Activated naive CD4-positive, alpha-beta T cell treated with anti-CD3 and anti-CD28 coated beads for 36 hours (primary cell): ENCODE measurements at regions of chr20 and their contacts with region 1.

Region 1: GRCh38 chr20:50165684-50166554 is 12.4 kb upstream of the PEDS1 start:
- DNase-seq: peak; percentile 97
- H3K4me3 Mint-ChIP-seq: peak overlapping the region; percentile 65
- H3K27ac Mint-ChIP-seq: peak overlapping the region; percentile 63
- H3K4me1 Mint-ChIP-seq: peaks cover 11% of the 10 kb centered on the region
- H3K27me3 Mint-ChIP-seq: peaks cover 2% of the 10 kb centered on the region

Region 2: GRCh38 chr20:49936153-49937027 is 229.5 kb before region 1 on chr20 and contains the start of gene RNF114:
- CTCF ChIA-PET with region 1: no interaction called
- intact Hi-C with region 1: loop called (anchors 1 kb)
- DNase-seq: peak; percentile 93
- H3K4me3 Mint-ChIP-seq: peak within 1 kb of the TSS; percentile 96
- H3K27ac Mint-ChIP-seq: peak within 1 kb of the TSS; percentile 83
- H3K4me1 Mint-ChIP-seq: peaks cover 46% of the 10 kb centered on the region
- H3K27me3 Mint-ChIP-seq: no peaks in the 10 kb centered on the region
- total RNA-seq, gene RNF114: 72.3 to 76.5 TPM

Region 3: DNA sequence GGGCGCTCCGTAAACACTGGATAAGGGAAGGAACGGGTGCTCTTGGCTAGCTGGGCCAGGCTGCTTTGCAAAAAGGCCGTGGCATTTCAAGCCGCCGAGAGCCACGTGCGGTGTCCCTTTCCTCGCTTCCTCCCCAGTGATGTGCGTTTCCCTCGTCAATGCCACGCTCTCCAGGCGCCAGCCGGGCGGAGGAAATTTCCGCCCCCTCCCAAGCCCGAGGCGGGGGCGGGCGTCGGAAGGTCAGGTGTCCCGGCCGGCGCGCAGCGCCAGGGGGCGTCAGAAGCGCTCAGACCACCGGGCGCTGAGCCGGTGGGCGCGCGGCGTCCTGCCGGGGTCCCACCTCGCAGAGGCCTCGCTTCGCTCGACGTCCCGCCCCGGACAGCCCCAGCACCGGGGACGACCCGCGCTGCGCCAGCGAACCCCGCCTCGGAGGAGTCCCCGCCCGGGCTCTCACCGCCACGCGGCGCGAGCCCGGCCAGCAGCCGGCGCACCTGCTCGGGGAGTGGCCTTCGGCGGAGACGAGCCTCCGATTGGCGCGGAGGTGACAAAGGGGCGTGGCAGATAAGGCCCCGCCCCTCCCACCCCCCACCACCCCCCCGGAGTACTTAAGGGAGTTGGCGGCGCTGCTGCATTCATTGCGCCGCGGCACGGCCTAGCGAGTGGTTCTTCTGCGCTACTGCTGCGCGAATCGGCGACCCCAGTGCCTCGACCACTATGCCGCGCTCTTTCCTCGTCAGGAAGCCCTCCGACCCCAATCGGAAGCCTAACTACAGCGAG is 183.4 kb before region 1 on chr20 and contains the start of gene SNAI1:
- CTCF ChIA-PET with region 1: interaction called, 19 read pairs
- intact Hi-C with region 1: loop called (anchors 1 kb)
- DNase-seq: peak; percentile 75
- H3K4me3 Mint-ChIP-seq: peak within 1 kb of the TSS; percentile 48
- H3K27ac Mint-ChIP-seq: no peak within 1 kb of the TSS
- H3K4me1 Mint-ChIP-seq: peaks cover 20% of the 10 kb centered on the region
- H3K27me3 Mint-ChIP-seq: peaks cover 3% of the 10 kb centered on the region
- total RNA-seq, gene SNAI1: 0.31 TPM in 1 of 2 experiments, not detected in the other

Region 4: DNA sequence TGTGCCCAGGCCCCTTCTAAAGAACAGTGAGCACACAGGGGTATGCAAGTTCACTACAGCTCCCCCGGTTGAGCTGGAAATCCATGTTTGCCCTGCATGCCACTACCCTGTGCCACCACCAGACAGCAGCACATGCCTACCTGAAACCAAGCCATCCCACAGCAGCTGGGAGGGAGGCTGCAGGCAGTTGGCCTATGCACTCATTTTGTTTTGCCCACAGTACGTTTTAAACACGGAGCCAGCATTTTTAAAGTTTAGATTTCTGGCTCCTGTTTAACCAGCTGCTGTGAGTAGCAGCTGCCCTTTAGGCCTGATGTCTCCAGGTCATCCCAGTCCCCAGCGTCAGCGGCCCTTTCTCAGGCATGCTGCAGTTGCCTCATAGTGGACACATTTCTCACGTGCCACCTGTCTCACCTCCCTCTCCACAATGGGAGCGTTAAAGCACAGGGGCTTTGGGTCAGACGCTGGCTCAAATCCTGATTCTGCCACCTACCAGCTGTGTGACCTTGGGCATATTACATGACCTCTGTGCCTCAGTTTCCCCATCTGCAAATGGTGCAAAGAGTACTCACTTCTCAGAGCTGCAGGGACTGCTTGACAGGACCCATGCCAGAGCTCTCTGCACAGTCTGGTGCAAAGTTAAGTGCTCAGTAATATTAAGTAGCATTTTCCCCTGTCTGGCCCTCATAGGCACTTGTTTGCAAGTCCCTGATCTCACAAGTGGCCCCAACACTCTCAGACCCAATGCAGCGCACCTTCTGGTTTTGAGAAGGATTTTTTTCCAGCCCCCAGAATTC is 44.8 kb before region 1 on chr20:
- CTCF ChIA-PET with region 1: interaction called, 164 read pairs
- intact Hi-C with region 1: loop called (anchors 1 kb)
- DNase-seq: peak; percentile 73
- H3K4me3 Mint-ChIP-seq: no peak overlapping the region
- H3K27ac Mint-ChIP-seq: no peak overlapping the region
- H3K4me1 Mint-ChIP-seq: peaks cover 8% of the 10 kb centered on the region
- H3K27me3 Mint-ChIP-seq: no peaks in the 10 kb centered on the region

Region 5: DNA sequence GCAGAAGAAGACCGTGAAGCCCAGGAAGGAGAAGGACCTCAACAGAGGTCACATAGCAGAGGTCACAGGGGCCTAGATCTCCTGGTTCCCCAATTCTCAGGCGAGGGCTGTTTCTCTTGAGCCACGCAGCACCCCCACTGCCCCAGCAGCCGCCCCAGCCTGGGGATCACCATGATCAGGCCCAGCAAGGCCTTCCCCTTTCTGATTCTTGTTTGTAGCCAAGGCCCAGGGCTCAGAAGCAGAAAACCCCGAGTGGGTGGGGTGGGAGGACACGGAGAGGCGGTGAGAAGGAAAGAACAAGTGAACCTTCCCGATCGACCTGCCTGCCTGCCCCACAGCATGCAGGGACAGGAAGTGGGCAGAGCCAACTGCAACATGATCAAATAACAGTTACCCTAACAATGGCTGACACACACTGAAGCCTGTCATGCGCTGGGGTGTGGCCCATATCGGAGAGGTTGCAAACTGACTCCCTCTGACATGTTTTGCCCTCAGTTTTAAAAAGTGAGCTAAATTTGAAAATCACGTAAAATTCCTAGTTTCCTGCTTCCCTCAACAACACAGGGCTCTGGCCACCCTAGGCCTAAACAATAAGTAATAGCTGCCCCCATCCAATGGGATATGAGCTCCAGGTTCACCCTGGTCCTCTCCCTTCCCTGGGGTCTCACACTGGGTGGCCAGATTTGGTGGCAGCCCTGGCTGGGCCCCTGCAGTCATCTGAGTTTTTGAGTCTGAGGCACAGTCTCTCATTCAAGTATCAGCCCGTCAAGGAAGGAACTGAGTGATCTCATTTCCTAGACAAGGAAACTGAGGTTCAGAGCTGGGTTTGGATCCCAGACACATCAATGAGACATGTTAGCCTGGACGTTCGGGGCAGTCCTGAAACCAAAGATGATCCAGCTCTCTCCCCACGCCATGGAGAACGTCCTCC is 18.9 kb before region 1 on chr20:
- CTCF ChIA-PET with region 1: interaction called, 14 read pairs
- intact Hi-C with region 1: loop called (anchors 1 kb)
- DNase-seq: peak; percentile 91
- H3K4me3 Mint-ChIP-seq: peak overlapping the region; percentile 74
- H3K27ac Mint-ChIP-seq: peak overlapping the region; percentile 98
- H3K4me1 Mint-ChIP-seq: peaks cover 61% of the 10 kb centered on the region
- H3K27me3 Mint-ChIP-seq: no peaks in the 10 kb centered on the region

Region 6: GRCh38 chr20:50153485-50154377 is 12.2 kb before region 1 on chr20 and contains the start of gene PEDS1:
- CTCF ChIA-PET with region 1: interaction called, 31 read pairs
- intact Hi-C with region 1: loop called (anchors 1 kb)
- DNase-seq: peak; percentile 87
- H3K4me3 Mint-ChIP-seq: peak within 1 kb of the TSS; percentile 75
- H3K27ac Mint-ChIP-seq: peak within 1 kb of the TSS; percentile 84
- H3K4me1 Mint-ChIP-seq: peaks cover 39% of the 10 kb centered on the region
- H3K27me3 Mint-ChIP-seq: no peaks in the 10 kb centered on the region
- total RNA-seq, gene PEDS1: 10.4 to 11.2 TPM

Region 7: GRCh38 chr20:50179507-50180016 is 13.6 kb after region 1 on chr20:
- CTCF ChIA-PET with region 1: interaction called, 13 read pairs
- intact Hi-C with region 1: no loop called
- DNase-seq: no peak
- H3K4me3 Mint-ChIP-seq: no peak overlapping the region
- H3K27ac Mint-ChIP-seq: no peak overlapping the region
- H3K4me1 Mint-ChIP-seq: no peaks in the 10 kb centered on the region
- H3K27me3 Mint-ChIP-seq: peaks cover 9% of the 10 kb centered on the region